Body of pancreas (tissue), 4 donors: ENCODE measurements at regions of chr7 and their contacts with region 1.

Region 1: GRCh38 chr7:992709-993607 is 10.0 kb downstream of the CYP2W1 start:
- DNase-seq: peak; percentile 96 to 98 (median 97)
- ATAC-seq: peak; percentile 98
- H3K4me3 ChIP-seq: no peak overlapping the region
- H3K27ac ChIP-seq: no peak overlapping the region
- H3K4me1 ChIP-seq: peaks cover 17% of the 10 kb centered on the region
- H3K27me3 ChIP-seq: no peaks in the 10 kb centered on the region
- CTCF ChIP-seq: peak; percentile 100
- POLR2A ChIP-seq: no peak

Region 2: GRCh38 chr7:1028031-1028770 is 35.2 kb after region 1 on chr7:
- intact Hi-C with region 1: no loop called
- DNase-seq: peak; percentile 91 to 94 (median 92)
- ATAC-seq: peak; percentile 80
- H3K4me3 ChIP-seq: peak overlapping the region; percentile 10 to 36
- H3K27ac ChIP-seq: peak overlapping the region; percentile 90 to 99 (median 98)
- H3K4me1 ChIP-seq: peaks cover 58% of the 10 kb centered on the region
- H3K27me3 ChIP-seq: no peaks in the 10 kb centered on the region
- CTCF ChIP-seq: no peak
- POLR2A ChIP-seq: peak; percentile 50 to 87 (median 61)

Region 3: GRCh38 chr7:1062296-1063294 is 69.6 kb after region 1 on chr7:
- intact Hi-C with region 1: loop called (anchors 2 kb)
- DNase-seq: no peak
- ATAC-seq: no peak
- H3K4me3 ChIP-seq: no peak overlapping the region
- H3K27ac ChIP-seq: no peak overlapping the region
- H3K4me1 ChIP-seq: peaks cover 23% of the 10 kb centered on the region
- H3K27me3 ChIP-seq: no peaks in the 10 kb centered on the region
- CTCF ChIP-seq: no peak
- POLR2A ChIP-seq: no peak

Region 4: GRCh38 chr7:1068619-1069018 is 75.7 kb after region 1 on chr7:
- intact Hi-C with region 1: loop called (anchors 2 kb)
- DNase-seq: no peak
- ATAC-seq: no peak
- H3K4me3 ChIP-seq: no peak overlapping the region
- H3K27ac ChIP-seq: no peak overlapping the region
- H3K4me1 ChIP-seq: peaks cover 11% of the 10 kb centered on the region
- H3K27me3 ChIP-seq: no peaks in the 10 kb centered on the region
- CTCF ChIP-seq: no peak
- POLR2A ChIP-seq: no peak

Region 5: DNA sequence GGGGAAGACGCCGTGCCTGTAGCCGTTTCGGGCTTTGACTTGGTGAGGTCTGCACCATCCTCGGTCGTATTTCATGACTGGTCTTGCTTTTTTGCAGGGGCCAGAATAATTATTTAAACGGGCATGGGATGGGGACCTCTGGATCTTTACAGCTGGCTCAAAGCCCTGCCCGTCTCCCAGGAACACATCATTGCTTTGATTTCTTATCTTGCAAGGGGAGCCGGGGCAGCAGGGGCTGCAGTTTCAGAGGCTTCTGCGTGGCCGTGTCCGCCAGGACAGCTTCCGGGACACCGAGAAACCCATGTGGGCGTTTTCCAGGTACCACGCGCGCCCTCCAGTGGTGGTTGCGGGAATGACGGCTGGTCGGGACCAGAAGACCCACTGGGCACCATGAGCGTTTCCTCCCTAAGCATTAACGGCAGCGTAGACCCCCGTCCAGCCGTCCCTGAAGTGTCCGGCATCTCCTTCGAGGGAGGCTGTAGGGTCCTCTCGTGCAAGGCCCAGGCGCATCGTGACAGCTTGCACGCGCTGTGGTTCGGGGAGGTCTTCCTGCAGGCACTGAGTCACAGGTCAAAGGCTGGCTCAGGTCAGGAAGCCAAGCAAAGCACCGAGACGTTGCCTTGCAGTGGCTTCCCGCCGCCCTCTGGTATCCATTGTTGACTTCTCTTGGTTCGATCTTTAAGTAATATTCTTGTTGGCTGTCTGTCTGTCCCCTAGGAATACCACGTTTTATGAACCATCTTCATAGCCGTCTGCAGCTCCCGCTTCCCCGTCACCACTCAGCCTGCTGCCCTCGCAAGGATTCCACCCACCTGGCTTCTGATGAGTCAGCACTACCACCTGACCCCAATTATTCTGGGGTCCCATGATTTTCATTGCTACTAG is 183.3 kb after region 1 on chr7:
- intact Hi-C with region 1: loop called (anchors 10 kb)
- DNase-seq: peak; percentile 83 to 90 (median 86)
- ATAC-seq: peak; percentile 91
- H3K4me3 ChIP-seq: no peak overlapping the region
- H3K27ac ChIP-seq: no peak overlapping the region
- H3K4me1 ChIP-seq: peaks cover 7% of the 10 kb centered on the region
- H3K27me3 ChIP-seq: no peaks in the 10 kb centered on the region
- CTCF ChIP-seq: peak; percentile 79 to 95 (median 90)
- POLR2A ChIP-seq: peak in 1 of 3 donors; percentile 8